Activated B cell treated with CpG ODN at 0.5 μM for 24 hours (primary cell): ENCODE measurements at regions of chr12 and their contacts with region 1.

Region 1: GRCh38 chr12:674272-674781 is 11.1 kb upstream of the NINJ2 start:
- DNase-seq: peak; percentile 45
- ATAC-seq: peak; percentile 86
- H3K4me3 Mint-ChIP-seq: peak overlapping the region; percentile 79
- H3K27ac Mint-ChIP-seq: peak overlapping the region; percentile 96
- H3K4me1 Mint-ChIP-seq: peaks cover 53% of the 10 kb centered on the region
- H3K27me3 Mint-ChIP-seq: no peaks in the 10 kb centered on the region
- CTCF ChIP-seq: no peak

Region 2: GRCh38 chr12:414859-415258 is 259.5 kb before region 1 on chr12:
- CTCF ChIA-PET with region 1: no interaction called
- POLR2A ChIA-PET with region 1: no interaction called
- intact Hi-C with region 1: no loop called
- DNase-seq: no peak
- ATAC-seq: no peak
- H3K4me3 Mint-ChIP-seq: no peak overlapping the region
- H3K27ac Mint-ChIP-seq: no peak overlapping the region
- H3K4me1 Mint-ChIP-seq: no peaks in the 10 kb centered on the region
- H3K27me3 Mint-ChIP-seq: no peaks in the 10 kb centered on the region
- CTCF ChIP-seq: no peak

Region 3: GRCh38 chr12:563250-563781 is 111.0 kb before region 1 on chr12:
- CTCF ChIA-PET with region 1: no interaction called
- POLR2A ChIA-PET with region 1: no interaction called
- intact Hi-C with region 1: no loop called
- DNase-seq: no peak
- ATAC-seq: peak; percentile 34
- H3K4me3 Mint-ChIP-seq: peak overlapping the region; percentile 39
- H3K27ac Mint-ChIP-seq: no peak overlapping the region
- H3K4me1 Mint-ChIP-seq: peaks cover 26% of the 10 kb centered on the region
- H3K27me3 Mint-ChIP-seq: peaks cover 8% of the 10 kb centered on the region
- CTCF ChIP-seq: no peak

Region 4: GRCh38 chr12:575948-576612 is 98.2 kb before region 1 on chr12:
- CTCF ChIA-PET with region 1: no interaction called
- POLR2A ChIA-PET with region 1: no interaction called
- intact Hi-C with region 1: loop called (anchors 1 kb)
- DNase-seq: peak; percentile 91
- ATAC-seq: peak; percentile 99
- H3K4me3 Mint-ChIP-seq: peak overlapping the region; percentile 75
- H3K27ac Mint-ChIP-seq: no peak overlapping the region
- H3K4me1 Mint-ChIP-seq: peaks cover 11% of the 10 kb centered on the region
- H3K27me3 Mint-ChIP-seq: no peaks in the 10 kb centered on the region
- CTCF ChIP-seq: peak; percentile 70

Region 5: DNA sequence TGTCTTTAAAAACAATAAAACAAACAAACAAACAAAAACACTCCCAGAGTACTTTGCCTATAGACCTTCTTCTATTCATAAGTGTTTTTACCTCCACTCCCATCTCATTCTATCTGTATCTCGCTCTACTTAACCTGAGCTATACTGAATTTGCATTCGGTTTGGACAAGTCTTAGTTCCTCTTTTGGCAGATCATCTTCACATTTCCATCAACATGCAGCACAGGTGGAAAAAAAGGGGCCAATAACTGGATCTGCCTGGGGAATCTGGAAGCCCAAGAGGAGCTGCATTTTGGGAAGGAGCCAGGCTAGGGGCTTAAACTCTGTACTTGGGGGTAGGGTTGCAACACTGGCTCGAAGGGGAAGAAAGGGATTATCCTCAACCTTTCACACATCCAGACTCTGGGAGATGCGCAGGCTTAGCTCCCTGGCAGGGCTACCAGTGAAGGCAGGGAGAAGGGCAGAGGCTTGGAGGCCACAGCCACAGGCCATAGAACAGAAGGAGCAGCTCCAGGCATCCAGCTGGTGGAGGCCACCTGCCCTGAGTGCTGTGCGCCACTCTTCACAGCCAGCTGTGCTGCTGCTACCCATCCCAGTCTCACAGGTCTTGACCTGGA is 15.1 kb before region 1 on chr12:
- CTCF ChIA-PET with region 1: interaction called, 4 read pairs
- POLR2A ChIA-PET with region 1: interaction called, 39 read pairs
- intact Hi-C with region 1: loop called (anchors 1 kb)
- DNase-seq: no peak
- ATAC-seq: peak; percentile 90
- H3K4me3 Mint-ChIP-seq: peak overlapping the region; percentile 1
- H3K27ac Mint-ChIP-seq: peak overlapping the region; percentile 1
- H3K4me1 Mint-ChIP-seq: peaks cover 31% of the 10 kb centered on the region
- H3K27me3 Mint-ChIP-seq: no peaks in the 10 kb centered on the region
- CTCF ChIP-seq: no peak

Region 6: GRCh38 chr12:685388-685787 is 11.1 kb after region 1 on chr12:
- CTCF ChIA-PET with region 1: interaction called, 6 read pairs
- POLR2A ChIA-PET with region 1: interaction called, 39 read pairs
- intact Hi-C with region 1: loop called (anchors 1 kb)
- DNase-seq: peak; percentile 64
- ATAC-seq: peak; percentile 79
- H3K4me3 Mint-ChIP-seq: peak overlapping the region; percentile 62
- H3K27ac Mint-ChIP-seq: peak overlapping the region; percentile 99
- H3K4me1 Mint-ChIP-seq: peaks cover 50% of the 10 kb centered on the region
- H3K27me3 Mint-ChIP-seq: no peaks in the 10 kb centered on the region
- CTCF ChIP-seq: no peak

Region 7: DNA sequence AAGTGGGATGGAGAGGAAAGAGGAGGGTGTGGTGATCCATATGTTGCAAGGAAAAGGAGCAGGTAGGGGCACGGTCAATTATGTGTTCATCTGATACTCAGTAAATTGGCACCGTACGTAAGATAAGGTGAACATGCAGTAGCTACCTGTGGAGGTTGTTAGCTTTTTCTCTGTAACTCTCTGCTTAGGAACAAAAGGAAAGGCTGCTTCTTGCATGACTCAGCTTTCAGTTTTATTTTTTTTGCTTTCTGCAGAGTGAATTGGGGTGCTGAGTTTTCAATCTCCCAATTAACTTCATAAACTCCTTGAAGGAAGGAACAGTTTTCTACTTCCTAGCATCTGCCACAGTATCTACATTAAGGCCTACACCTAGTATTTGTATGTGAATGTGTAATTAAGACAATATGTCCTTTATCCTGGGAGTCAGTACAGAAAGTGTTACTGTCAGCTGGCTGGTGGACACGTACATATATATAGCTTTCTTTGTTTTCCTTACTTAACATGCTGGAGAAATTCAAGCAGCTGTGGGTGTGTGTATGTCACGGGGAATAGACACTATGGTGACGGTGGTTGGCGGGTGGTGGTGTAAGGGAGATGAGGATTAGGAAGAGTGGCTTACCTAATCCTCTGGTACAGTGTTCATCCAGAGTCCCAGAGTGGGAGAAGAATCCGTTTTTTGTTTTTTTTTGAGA is 38.0 kb after region 1 on chr12:
- CTCF ChIA-PET with region 1: no interaction called
- POLR2A ChIA-PET with region 1: interaction called, 10 read pairs
- intact Hi-C with region 1: no loop called
- DNase-seq: no peak
- ATAC-seq: no peak
- H3K4me3 Mint-ChIP-seq: no peak overlapping the region
- H3K27ac Mint-ChIP-seq: no peak overlapping the region
- H3K4me1 Mint-ChIP-seq: peaks cover 5% of the 10 kb centered on the region
- H3K27me3 Mint-ChIP-seq: no peaks in the 10 kb centered on the region
- CTCF ChIP-seq: no peak

Region 8: GRCh38 chr12:718756-719102 is 44.4 kb after region 1 on chr12:
- CTCF ChIA-PET with region 1: no interaction called
- POLR2A ChIA-PET with region 1: interaction called, 34 read pairs
- intact Hi-C with region 1: loop called (anchors 2 kb)
- DNase-seq: no peak
- ATAC-seq: no peak
- H3K4me3 Mint-ChIP-seq: peak overlapping the region; percentile 44
- H3K27ac Mint-ChIP-seq: peak overlapping the region; percentile 94
- H3K4me1 Mint-ChIP-seq: peaks cover 43% of the 10 kb centered on the region
- H3K27me3 Mint-ChIP-seq: no peaks in the 10 kb centered on the region
- CTCF ChIP-seq: no peak

Region 9: DNA sequence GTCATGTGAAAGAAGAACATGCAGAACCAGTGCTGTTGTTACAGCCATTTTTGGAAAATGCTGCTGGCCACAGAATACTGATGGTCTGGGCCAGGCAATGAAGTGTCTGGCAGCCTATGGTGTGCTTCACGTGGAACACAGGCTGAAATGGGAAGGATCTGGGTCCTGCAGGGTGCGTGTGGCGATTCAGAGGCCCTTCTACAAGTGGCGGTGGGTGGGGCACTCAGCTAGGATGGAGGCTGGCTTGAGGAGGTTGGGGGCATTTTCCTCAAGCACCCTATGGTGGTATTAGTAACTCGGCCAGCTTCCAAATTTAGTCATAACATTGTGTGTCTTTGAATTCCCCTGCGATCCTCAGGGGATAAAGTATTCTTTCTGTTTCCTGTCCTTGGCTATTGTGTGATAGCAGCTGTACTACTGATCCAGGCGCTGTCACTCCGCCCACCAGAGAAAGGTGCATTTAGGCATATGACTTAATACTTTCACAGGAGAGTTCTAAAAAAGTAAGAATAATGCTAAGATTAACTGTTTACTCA is 284.3 kb after region 1 on chr12:
- CTCF ChIA-PET with region 1: no interaction called
- POLR2A ChIA-PET with region 1: no interaction called
- intact Hi-C with region 1: no loop called
- DNase-seq: no peak
- ATAC-seq: peak; percentile 92
- H3K4me3 Mint-ChIP-seq: peak overlapping the region; percentile 4
- H3K27ac Mint-ChIP-seq: peak overlapping the region; percentile 20
- H3K4me1 Mint-ChIP-seq: peaks cover 8% of the 10 kb centered on the region
- H3K27me3 Mint-ChIP-seq: no peaks in the 10 kb centered on the region
- CTCF ChIP-seq: no peak